ENCODE measurements at regions of chr17 and their contacts with region 1.

Region 1: DNA sequence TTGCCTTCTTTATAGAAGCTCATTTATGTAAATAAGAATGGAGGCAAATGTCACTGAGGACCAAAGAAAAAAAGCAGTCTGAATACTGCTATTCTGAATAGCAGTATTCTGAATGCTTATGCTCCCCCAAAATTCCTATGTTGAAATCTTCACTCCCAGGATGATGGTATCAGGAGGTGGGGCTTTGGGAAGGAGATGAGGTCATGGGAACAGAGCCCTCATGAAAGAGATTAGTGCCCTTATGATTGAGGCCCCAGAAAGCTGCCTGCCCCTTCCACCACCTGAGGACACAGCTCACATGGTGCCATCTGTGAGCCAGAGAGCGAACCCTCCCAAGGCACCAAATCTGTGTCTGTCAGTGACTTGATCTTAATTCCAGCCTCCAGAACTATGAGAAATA is 28.8 kb downstream of the HEATR6 start:
- DNase-seq: no peak
- ATAC-seq: no peak
- H3K4me3 ChIP-seq: no peak overlapping the region
- H3K27ac ChIP-seq: no peak overlapping the region
- H3K4me1 ChIP-seq: no peaks in the 10 kb centered on the region
- H3K27me3 ChIP-seq: no peaks in the 10 kb centered on the region
- CTCF ChIP-seq: no peak

Region 2: GRCh38 chr17:59676716-59677115 is 373.2 kb before region 1 on chr17:
- intact Hi-C with region 1: loop called (anchors 5 to 10 kb)
- DNase-seq: no peak
- ATAC-seq: peak in 1 of 4 donors; percentile 37
- H3K4me3 ChIP-seq: no peak overlapping the region
- H3K27ac ChIP-seq: no peak overlapping the region
- H3K4me1 ChIP-seq: no peaks in the 10 kb centered on the region
- H3K27me3 ChIP-seq: no peaks in the 10 kb centered on the region
- CTCF ChIP-seq: no peak

Region 3: GRCh38 chr17:59954856-59955255 is 95.1 kb before region 1 on chr17:
- intact Hi-C with region 1: loop called in 1 of 2 experiments (anchors 10 kb)
- DNase-seq: no peak
- ATAC-seq: no peak
- H3K4me3 ChIP-seq: no peak overlapping the region
- H3K27ac ChIP-seq: no peak overlapping the region
- H3K4me1 ChIP-seq: peaks cover 5% of the 10 kb centered on the region
- H3K27me3 ChIP-seq: no peaks in the 10 kb centered on the region
- CTCF ChIP-seq: no peak

Region 4: GRCh38 chr17:60193482-60193881 is 143.5 kb after region 1 on chr17:
- intact Hi-C with region 1: loop called in 1 of 2 experiments (anchors 10 kb)
- DNase-seq: no peak
- ATAC-seq: no peak
- H3K4me3 ChIP-seq: no peak overlapping the region
- H3K27ac ChIP-seq: no peak overlapping the region
- H3K4me1 ChIP-seq: no peaks in the 10 kb centered on the region
- H3K27me3 ChIP-seq: no peaks in the 10 kb centered on the region
- CTCF ChIP-seq: no peak

Measured in psoas muscle (tissue), 8 donors.